Activated CD8-positive, alpha-beta T cell treated with anti-CD3 and anti-CD28 coated beads for 36 hours (primary cell): ENCODE measurements at regions of chr19 and their contacts with region 1.

Region 1: GRCh38 chr19:17841810-17842662 is 5.7 kb downstream of the JAK3 start:
- DNase-seq: peak; percentile 84
- ATAC-seq: peak; percentile 91
- H3K4me3 Mint-ChIP-seq: no peak overlapping the region
- H3K27ac Mint-ChIP-seq: no peak overlapping the region
- H3K4me1 Mint-ChIP-seq: peaks cover 39% of the 10 kb centered on the region
- H3K27me3 Mint-ChIP-seq: no peaks in the 10 kb centered on the region
- CTCF ChIP-seq: no peak

Region 2: DNA sequence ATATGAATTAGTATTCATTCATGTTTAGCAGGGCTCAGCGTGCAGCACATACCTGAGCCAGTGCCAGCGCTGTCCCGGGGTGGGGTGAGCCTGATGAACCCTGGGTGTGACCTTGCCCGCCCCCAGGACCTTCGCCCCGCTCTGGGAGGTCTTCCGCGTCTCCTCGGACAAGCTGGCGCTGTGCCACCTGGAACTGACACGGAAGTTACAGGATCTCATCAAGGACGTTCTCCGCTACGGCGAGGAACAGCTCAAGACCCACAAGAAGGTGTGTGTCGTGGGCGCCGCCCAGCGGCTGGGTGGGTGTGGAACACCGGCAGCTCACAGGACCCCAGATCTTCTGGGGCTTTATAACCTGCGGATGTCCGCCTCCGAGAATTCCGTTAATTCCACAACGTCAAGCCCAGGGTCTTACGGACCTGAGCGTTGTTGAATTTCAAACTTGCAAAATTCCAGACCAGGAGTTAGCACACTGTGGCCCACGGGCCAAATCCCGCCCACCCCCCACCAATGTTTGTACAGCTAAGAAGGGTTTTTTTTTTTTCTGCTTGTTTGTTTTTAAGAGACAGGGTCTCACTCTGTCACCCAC is 75.4 kb before region 1 on chr19:
- CTCF ChIA-PET with region 1: no interaction called
- POLR2A ChIA-PET with region 1: no interaction called
- intact Hi-C with region 1: no loop called
- DNase-seq: peak; percentile 66
- ATAC-seq: peak; percentile 58
- H3K4me3 Mint-ChIP-seq: no peak overlapping the region
- H3K27ac Mint-ChIP-seq: no peak overlapping the region
- H3K4me1 Mint-ChIP-seq: peaks cover 2% of the 10 kb centered on the region
- H3K27me3 Mint-ChIP-seq: no peaks in the 10 kb centered on the region
- CTCF ChIP-seq: peak; percentile 46

Region 3: GRCh38 chr19:17824339-17824738 is 17.7 kb before region 1 on chr19:
- CTCF ChIA-PET with region 1: no interaction called
- POLR2A ChIA-PET with region 1: interaction called, 11 read pairs
- intact Hi-C with region 1: no loop called
- DNase-seq: no peak
- ATAC-seq: no peak
- H3K4me3 Mint-ChIP-seq: no peak overlapping the region
- H3K27ac Mint-ChIP-seq: no peak overlapping the region
- H3K4me1 Mint-ChIP-seq: no peaks in the 10 kb centered on the region
- H3K27me3 Mint-ChIP-seq: no peaks in the 10 kb centered on the region
- CTCF ChIP-seq: no peak

Region 4: GRCh38 chr19:17830567-17831418 is 11.2 kb before region 1 on chr19:
- CTCF ChIA-PET with region 1: interaction called, 3 read pairs
- POLR2A ChIA-PET with region 1: interaction called, 19 read pairs
- intact Hi-C with region 1: no loop called
- DNase-seq: peak; percentile 76
- ATAC-seq: peak; percentile 94
- H3K4me3 Mint-ChIP-seq: no peak overlapping the region
- H3K27ac Mint-ChIP-seq: no peak overlapping the region
- H3K4me1 Mint-ChIP-seq: peaks cover 9% of the 10 kb centered on the region
- H3K27me3 Mint-ChIP-seq: no peaks in the 10 kb centered on the region
- CTCF ChIP-seq: no peak